ENCODE measurements at regions of chr6 and their contacts with region 1.

Region 1: GRCh38 chr6:137415127-137415833 is 78.9 kb downstream of the OLIG3 start:
- DNase-seq: peak; percentile 60
- ATAC-seq: peak; percentile 83

Region 2: GRCh38 chr6:137218917-137219663 is 196.2 kb before region 1 on chr6 and contains the start of gene IFNGR1:
- intact Hi-C with region 1: no loop called
- DNase-seq: peak; percentile 99
- ATAC-seq: peak; percentile 97
- total RNA-seq, gene IFNGR1: 103 TPM

Region 3: DNA sequence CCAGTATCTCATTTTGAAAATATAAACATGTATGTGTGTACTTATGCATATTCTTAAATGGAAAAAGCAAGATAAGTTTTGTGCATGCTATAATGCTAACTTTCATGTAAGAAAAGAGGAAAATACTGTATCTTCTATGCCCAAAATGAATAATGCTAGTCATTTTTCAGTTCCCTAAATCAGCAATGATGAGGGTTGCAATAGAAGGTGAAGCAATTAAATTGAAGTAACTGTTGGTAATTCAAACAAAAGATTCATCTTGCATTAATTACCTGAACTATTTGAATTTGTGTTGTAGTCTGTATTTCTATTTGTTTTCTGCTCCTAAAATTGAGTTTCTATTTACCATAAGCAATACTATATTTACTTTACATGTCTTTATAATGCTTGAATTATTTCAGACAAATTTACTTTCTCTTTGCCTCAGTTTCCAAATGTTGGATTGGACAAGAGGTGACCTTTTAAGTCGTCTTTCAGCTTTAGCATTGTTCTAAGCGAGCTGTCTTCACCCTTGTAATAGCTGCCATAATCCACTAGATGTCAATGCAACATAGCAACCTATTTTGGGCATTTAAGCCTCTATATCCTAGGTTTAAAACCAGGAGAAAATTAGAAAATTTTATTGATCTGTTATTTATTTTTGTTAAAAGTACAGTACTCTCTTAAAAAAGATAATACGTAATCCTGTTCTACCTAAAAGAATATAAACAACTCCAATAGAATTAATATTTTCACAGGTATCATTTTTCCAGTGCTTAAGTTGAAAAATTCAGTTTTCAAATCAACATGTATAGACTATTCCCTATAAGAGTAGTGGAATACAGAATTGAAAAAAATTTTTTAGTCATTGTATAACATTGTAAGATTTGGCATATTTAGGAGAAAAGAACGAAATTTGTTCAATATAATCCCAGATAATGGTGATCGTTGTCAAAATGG is 143.8 kb before region 1 on chr6:
- intact Hi-C with region 1: loop called (anchors 1 kb)
- DNase-seq: no peak
- ATAC-seq: peak; percentile 74

Region 4: DNA sequence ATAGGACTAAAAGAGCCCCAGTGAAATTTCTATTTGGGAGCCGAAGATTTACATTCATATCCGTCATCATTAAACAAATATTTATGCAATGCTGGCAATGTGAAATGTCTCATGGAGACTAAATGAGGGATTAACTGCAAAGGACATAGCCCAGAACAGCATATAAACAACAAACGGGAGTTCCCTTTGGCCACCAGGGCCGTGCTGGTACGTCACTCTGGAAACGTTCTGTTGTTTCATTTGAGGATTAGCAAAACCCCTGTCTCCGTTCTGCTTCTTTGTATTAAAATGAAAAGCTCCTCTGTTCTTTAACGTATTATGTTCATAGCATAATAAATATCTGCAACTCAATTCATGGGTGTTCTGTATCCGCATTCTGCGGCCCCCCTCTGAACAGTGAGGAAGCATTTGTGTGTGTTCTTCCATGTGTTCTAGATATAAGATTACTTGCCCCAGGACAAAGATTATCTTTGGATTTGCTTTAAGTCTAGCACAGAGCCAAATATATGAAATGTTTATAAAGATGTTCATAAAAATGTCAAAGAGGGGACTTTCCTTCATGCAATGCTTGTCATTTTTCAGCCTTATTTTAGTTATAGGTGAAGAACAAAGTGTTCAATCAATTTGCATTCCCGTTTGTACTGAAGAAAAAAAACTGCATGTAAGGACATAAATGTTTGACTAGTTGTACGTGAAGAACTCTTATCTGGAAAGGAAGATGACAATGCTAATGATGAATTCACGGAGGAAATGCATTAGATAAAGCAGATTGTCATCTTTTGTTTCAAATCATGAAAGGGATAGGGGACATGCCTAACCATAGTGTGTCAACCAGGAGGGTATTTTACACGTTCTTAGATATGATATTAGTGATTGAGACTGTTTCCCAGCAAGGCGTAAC is 361.8 kb after region 1 on chr6:
- intact Hi-C with region 1: no loop called
- DNase-seq: no peak
- ATAC-seq: no peak